Breast epithelium (tissue), 4 donors: ENCODE measurements at regions of chrX and their contacts with region 1.

Region 1: GRCh38 chrX:115912372-115912897 is 258.1 kb upstream of the AGTR2 start:
- DNase-seq: no peak
- H3K4me3 ChIP-seq: no peak overlapping the region
- H3K27ac ChIP-seq: no peak overlapping the region
- H3K4me1 ChIP-seq: no peaks in the 10 kb centered on the region
- H3K27me3 ChIP-seq: peaks cover 0 to 38% of the 10 kb centered on the region in 2 donors
- CTCF ChIP-seq: peak in 1 of 3 donors; percentile 11
- POLR2A ChIP-seq: no peak

Region 2: GRCh38 chrX:115892787-115893671 is 19.4 kb before region 1 on chrX:
- intact Hi-C with region 1: loop called (anchors 1 kb)
- DNase-seq: peak; percentile 54 to 59
- H3K4me3 ChIP-seq: peak overlapping the region in 2 of 3 donors; percentile 45 to 47
- H3K27ac ChIP-seq: peak overlapping the region; percentile 27 to 65
- H3K4me1 ChIP-seq: no peaks in the 10 kb centered on the region
- H3K27me3 ChIP-seq: no peaks in the 10 kb centered on the region
- CTCF ChIP-seq: peak in 2 of 3 donors; percentile 46 to 79
- POLR2A ChIP-seq: no peak